ENCODE measurements at regions of chr11 and their contacts with region 1.

Region 1: DNA sequence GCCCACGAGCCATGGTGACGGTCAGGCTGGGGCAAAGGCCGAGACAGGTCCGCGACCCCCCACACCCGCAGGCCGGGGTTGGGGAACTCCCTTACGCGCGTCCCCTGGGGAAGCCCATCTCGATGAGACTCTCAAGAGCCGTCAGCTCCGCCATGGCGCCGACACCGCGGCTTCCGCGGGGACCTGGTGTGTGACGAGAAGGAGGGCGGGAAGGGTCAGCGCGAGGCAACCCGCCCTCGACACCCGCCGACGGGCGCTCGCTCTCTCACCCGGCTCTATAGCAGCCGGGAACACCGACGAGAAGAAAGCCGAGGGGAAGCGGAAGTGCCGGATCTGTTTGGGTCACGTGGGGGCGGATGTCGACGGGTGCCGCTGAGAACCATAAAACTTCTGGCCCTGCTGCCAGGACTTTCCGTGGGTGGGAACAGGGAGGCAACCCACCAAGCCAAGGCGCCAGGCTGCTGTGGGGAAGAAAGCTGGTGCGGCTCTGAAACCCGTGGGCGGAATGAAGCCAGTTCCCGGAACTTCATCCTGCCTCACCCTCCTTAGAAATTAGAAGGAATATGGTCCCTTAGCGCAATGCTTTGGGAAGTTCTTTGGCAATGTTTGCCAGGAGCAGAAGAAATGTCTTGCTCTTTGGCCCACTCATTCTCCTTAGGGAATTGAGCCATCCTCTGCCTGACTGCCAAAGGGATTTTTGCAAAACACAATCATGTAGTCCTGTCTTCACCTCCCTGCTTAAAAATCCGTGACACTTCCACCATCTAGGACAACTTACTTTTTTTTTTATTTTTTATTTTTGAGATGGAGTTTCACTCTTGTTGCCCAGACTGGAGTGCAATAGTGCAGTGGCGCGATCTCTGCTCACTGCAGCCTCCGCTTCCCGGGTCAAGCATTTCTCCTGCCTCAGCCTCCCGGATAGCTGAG is at the start of gene UBXN1:
- H3K4me3 ChIP-seq: peak within 1 kb of the TSS; percentile 90
- H3K27ac ChIP-seq: peak within 1 kb of the TSS; percentile 62
- H3K4me1 ChIP-seq: peaks cover 8% of the 10 kb centered on the region
- CTCF ChIP-seq: no peak

Region 2: DNA sequence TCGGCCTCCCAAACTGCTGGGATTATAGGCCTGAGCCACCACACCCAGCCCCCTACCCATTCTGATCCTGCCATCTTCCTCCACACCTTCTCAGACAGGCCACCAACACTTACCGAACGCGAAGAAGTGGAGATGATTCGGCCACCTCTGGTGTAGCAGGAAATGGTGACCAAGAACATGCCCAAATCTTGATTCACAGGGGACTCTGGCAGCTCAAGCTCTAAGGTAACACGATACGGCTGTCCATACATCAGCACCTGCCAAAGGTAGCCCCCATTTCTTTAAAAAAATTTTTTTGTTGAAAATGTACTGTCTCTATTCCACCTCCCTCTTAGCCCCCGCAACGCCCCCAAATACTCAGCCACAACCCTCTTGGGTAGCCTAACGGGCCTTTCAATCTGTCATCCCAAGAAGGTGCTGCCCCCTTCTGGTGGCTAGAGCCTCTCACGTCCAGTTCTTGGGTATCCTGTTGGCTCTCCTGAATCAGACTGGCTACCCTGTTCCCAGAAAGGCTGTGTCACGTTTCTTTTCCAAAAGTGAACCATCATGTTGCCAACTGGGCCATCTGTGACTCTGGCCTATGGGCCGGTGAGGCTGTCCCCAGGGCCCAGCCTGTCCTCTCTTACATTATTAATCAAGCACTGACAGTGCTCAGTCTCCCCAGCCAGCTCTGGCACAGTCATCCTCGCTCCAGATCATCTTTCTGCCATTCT is 15.6 kb after region 1 on chr11:
- CTCF ChIA-PET with region 1: interaction called, 46 read pairs
- POLR2A ChIA-PET with region 1: interaction called, 8 read pairs
- H3K4me3 ChIP-seq: no peak overlapping the region
- H3K27ac ChIP-seq: no peak overlapping the region
- H3K4me1 ChIP-seq: no peaks in the 10 kb centered on the region
- CTCF ChIP-seq: peak; percentile 11; the same call in 1 of the 2 replicates

Region 3: DNA sequence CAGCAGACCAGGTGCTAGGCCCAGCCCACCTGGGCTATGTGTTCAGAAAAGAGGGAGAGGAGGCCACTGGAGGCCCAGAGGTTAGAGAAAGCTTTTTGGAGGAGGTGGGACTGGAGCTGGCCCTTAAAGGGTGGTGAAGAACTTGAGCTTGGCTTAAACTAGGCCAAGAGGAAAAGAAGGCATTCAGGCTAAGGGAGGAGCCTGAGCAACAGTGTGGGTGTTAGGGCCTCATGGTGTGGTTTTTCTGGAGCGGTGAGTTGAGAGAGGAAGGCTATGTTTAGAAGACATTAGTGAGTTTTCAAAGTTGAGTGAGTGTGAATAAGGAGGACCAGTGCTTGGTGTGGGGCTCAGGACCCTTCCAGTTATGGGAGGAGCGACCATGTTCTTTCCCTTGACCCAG is 98.4 kb after region 1 on chr11:
- CTCF ChIA-PET with region 1: no interaction called
- POLR2A ChIA-PET with region 1: no interaction called
- H3K4me3 ChIP-seq: no peak overlapping the region
- H3K27ac ChIP-seq: no peak overlapping the region
- H3K4me1 ChIP-seq: no peaks in the 10 kb centered on the region
- CTCF ChIP-seq: no peak